A673 (cell line): ENCODE measurements at regions of chr6 and their contacts with region 1.

Region 1: DNA sequence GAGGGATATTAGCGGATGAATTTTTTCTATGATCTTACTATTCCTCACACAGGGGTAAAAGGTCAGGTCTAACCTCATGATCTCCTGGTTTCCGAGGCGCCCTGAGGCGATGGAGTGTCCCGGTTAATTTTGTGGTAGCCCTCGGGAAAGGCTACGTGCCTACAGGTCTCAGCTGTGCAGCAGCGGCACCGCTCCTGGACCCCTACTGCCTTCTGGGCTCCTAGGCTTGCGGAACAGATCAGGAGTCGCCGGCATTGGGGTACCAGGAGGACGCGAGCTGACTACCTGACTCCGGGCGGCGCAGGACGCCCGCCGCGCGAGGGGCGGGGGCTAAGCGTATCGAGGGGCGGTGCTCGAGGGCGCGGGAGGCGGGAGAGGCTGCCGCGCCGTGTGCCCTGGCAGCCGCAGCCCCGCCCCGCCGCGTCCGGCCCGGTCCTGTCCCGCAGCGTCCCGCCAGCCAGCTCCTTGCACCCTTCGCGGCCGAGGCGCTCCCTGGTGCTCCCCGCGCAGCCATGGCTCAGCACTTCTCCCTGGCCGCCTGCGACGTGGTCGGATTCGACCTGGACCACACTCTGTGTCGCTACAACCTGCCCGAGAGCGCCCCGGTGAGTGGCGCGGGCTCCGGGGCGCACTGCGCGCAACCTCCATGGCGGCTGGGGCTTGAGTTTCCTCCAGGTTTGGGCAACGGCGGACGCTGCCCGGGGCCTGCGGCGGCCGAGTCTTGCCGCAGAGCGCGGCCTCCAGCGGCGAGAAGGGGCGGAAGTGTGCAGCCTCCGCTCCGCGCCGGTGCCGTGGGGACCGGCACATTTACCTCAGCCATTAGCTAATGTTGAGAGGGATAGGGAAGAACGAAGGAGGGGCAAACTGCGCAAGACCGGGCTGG is at the start of gene NT5DC1:
- DNase-seq: peak; percentile 89
- H3K4me3 ChIP-seq: peak within 1 kb of the TSS; percentile 91
- H3K27ac ChIP-seq: peak within 1 kb of the TSS; percentile 84
- H3K4me1 ChIP-seq: peaks cover 15% of the 10 kb centered on the region
- H3K27me3 ChIP-seq: no peaks in the 10 kb centered on the region
- CTCF ChIP-seq: peak; percentile 47
- total RNA-seq, gene NT5DC1: 37.9 and 47.9 TPM in 2 replicates

Region 2: GRCh38 chr6:115896538-115897129 is 204.0 kb before region 1 on chr6:
- CTCF ChIA-PET with region 1: no interaction called
- POLR2A ChIA-PET with region 1: no interaction called
- intact Hi-C with region 1: loop called (anchors 5 kb)
- DNase-seq: peak; percentile 63
- H3K4me3 ChIP-seq: no peak overlapping the region
- H3K27ac ChIP-seq: no peak overlapping the region
- H3K4me1 ChIP-seq: peaks cover 3% of the 10 kb centered on the region
- H3K27me3 ChIP-seq: no peaks in the 10 kb centered on the region
- CTCF ChIP-seq: peak; percentile 92

Region 3: DNA sequence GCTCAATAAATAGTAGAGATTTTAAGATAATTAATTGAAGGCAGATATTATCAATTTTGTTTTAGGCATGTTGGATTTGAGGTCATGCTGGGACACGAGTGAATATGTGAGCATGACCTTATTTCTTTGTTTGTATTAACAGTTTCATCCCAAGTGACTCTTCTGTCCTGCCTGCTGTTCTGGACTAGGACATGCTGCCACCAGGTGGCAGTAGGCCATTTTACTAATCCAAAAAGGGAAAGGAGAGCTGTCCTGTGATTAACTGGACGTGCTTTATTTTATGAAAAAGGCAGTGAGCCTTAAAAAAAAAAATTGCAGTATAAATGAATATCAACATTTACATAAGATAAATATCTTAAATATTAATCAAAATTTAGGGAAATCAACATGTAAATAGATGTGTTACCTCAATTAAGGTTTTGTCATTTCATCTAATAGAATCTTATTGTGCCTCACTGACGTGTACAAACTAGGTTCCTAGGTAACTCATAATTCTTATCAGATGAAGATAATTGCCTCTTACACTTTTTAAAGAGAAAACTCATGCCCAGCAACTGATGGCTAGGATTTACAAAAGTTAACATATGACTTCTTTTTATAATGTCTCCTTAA is 89.8 kb before region 1 on chr6:
- CTCF ChIA-PET with region 1: interaction called, 14 read pairs
- POLR2A ChIA-PET with region 1: no interaction called
- intact Hi-C with region 1: loop called (anchors 1 kb)
- DNase-seq: peak; percentile 79
- H3K4me3 ChIP-seq: no peak overlapping the region
- H3K27ac ChIP-seq: no peak overlapping the region
- H3K4me1 ChIP-seq: peaks cover 35% of the 10 kb centered on the region
- H3K27me3 ChIP-seq: no peaks in the 10 kb centered on the region
- CTCF ChIP-seq: peak; percentile 92

Region 4: GRCh38 chr6:116060572-116061283 is 39.9 kb before region 1 on chr6 and contains the start of gene FRK:
- CTCF ChIA-PET with region 1: no interaction called
- POLR2A ChIA-PET with region 1: no interaction called
- intact Hi-C with region 1: loop called (anchors 5 kb)
- DNase-seq: peak; percentile 63
- H3K4me3 ChIP-seq: peak within 1 kb of the TSS; percentile 54
- H3K27ac ChIP-seq: peak within 1 kb of the TSS; percentile 74
- H3K4me1 ChIP-seq: peaks cover 10% of the 10 kb centered on the region
- H3K27me3 ChIP-seq: no peaks in the 10 kb centered on the region
- CTCF ChIP-seq: peak; percentile 59
- total RNA-seq, gene FRK: 10.0 and 12.3 TPM in 2 replicates

Region 5: DNA sequence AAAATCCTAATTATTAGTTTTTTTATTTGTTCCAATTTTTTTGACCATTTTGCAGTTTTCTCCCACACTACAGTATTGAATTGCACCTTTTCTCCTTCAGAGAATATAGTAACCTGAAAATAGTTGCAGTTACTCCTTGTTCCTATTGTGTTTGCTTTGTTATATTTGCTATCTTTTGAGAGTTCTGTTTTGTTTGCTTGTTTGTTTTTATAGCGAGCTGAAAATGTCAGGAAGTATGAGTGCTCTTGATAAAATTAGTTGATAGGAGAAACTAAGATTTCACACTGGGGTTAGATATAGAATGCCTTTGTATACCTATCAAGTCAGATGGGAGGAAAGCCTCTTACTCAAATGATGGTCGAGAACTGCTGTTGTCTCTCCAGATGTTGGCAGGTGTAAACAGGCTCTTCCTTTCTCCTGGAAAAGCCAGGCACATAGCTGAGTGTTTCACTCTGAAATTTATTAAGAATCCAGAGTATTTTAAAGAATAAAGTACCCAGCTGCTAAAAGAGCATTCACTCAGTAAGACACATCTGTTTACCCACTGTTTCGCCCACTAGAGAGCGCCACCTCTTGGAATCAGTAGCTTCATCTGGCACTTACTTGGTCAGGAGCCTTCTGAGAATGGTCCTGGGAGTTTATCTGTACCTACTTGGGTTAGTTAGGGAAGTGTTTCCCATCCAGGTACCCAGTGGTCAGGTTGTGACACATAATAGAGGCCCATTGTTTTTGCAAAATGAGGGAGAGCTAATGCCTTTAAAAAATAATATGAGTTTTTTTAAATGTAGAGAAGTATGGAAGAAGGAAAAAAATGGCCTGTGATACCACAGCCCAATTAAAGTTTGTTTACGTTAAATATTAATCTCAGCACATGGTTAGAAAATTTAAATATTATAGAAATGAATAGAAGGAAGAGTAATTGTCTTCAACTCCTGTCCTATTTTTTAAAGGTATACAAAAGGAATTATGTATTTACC is 11.2 kb after region 1 on chr6:
- CTCF ChIA-PET with region 1: interaction called, 11 read pairs
- POLR2A ChIA-PET with region 1: no interaction called
- intact Hi-C with region 1: no loop called
- DNase-seq: peak; percentile 76
- H3K4me3 ChIP-seq: no peak overlapping the region
- H3K27ac ChIP-seq: no peak overlapping the region
- H3K4me1 ChIP-seq: no peaks in the 10 kb centered on the region
- H3K27me3 ChIP-seq: no peaks in the 10 kb centered on the region
- CTCF ChIP-seq: peak; percentile 86

Region 6: DNA sequence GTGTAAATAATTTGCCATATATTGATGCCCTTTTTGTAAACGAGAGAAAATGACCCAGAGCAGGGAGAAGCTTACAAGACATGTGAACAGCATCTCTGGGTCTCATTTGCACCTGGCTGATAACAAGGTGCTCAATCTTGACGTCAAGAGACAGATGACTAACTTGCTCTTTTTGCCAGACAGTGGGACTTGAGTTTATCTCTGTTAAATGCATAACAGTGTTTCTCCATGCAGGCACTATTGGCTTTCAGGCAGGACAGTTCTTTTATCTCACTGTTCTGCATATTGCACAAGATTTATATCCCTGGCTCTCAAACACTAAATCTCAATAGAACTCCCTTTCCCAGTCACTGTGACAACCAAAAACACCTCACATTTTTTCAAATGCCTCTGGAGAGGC is 832.8 kb after region 1 on chr6:
- CTCF ChIA-PET with region 1: no interaction called
- POLR2A ChIA-PET with region 1: no interaction called
- intact Hi-C with region 1: no loop called
- DNase-seq: no peak
- H3K4me3 ChIP-seq: no peak overlapping the region
- H3K27ac ChIP-seq: no peak overlapping the region
- H3K4me1 ChIP-seq: no peaks in the 10 kb centered on the region
- H3K27me3 ChIP-seq: peaks cover 35% of the 10 kb centered on the region
- CTCF ChIP-seq: no peak